ENCODE measurements at regions of chr2 and their contacts with region 1.

Region 1: DNA sequence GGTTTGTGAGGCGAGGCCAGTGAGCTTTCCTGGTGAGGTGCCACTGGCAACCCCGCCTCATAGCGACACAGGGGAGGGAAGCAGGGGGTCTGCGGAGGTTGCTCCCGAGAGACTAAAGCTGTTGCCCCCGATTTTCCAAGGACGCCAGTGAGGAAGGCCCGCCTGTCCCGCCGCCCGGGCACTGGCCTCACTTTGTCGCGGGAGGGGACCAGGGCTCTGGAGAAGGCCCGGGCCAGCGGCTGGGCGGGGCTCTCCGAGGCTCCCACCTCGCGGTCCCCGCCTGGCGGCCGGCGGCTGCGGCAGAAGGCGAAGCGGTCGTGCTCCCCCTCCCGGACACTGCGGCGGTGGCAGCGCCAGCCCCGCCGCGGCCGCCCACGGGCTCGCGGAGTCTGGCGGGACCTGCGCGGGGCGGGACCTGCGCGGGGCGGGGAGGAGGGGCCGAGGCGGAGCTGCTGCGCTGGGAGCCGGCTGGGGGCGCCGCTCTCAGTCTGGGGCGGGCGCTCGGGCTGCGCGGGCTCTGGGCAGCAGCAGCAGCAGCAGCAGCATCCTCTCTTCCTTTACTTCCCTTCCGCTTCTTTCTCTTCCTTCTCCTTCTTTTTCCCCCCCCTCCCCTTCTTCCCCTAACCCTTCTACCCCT is at the start of gene MAP2:
- DNase-seq: peak; percentile 88

Region 2: GRCh38 chr2:209334198-209335017 is 89.3 kb before region 1 on chr2:
- CTCF ChIA-PET with region 1: interaction called, 18 read pairs
- POLR2A ChIA-PET with region 1: no interaction called
- DNase-seq: peak; percentile 51

Region 3: GRCh38 chr2:209553913-209554312 is 130.2 kb after region 1 on chr2:
- CTCF ChIA-PET with region 1: interaction called, 13 read pairs
- POLR2A ChIA-PET with region 1: no interaction called
- DNase-seq: no peak